ENCODE measurements at regions of chr1 and their contacts with region 1.

Region 1: DNA sequence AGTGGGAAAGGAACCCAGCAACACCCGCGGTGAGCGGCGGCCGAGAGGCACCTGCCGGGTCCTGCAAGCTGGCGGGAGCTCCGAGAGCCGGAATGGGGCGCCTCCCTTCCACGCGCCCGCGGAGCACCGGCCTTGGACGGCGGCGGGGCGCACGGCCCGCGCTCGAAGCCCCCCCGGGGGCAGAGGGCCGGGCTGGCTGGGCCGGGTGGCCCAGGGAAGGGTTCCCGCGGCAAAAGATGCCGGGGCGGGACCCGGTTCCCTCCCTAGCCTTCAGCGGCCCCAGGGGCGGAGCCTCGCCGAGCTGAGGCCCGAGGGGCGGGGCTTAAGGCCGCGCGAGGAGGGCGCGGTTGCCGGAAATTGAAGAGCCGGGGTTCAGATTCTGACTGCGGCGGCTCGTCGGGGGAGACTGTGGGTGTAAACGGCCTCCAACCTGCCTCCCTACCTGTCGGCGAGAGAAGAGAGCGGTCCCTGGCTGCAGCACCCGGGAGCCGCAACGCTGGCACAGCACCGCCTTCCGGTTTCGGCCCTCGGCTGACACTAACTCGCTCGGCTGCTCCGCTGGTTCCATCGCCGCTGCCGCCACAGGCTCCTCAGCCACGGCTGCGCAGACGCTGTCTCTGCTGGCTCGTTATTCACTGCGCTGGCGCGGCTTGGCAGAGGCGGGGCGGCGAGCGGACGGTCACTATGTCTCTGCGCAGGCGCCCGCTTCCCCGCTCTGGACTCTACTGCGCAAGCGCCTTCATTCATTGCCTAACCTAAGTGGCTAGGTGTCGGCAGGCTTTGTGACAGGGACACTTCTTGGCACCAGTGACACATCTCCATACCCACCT is at the start of gene RABIF:
- DNase-seq: peak; percentile 78
- H3K4me3 ChIP-seq: peak within 1 kb of the TSS; percentile 89
- H3K27ac ChIP-seq: peak within 1 kb of the TSS; percentile 87
- H3K27me3 ChIP-seq: no peaks in the 10 kb centered on the region
- CTCF ChIP-seq: peak; percentile 43
- polyA plus RNA-seq, gene RABIF: 11.5 and 12.6 TPM in 2 replicates

Region 2: GRCh38 chr1:202786804-202787203 is 101.9 kb before region 1 on chr1:
- CTCF ChIA-PET with region 1: no interaction called
- POLR2A ChIA-PET with region 1: interaction called, 11 read pairs
- DNase-seq: no peak
- H3K4me3 ChIP-seq: no peak overlapping the region
- H3K27ac ChIP-seq: peak overlapping the region; percentile 39
- H3K27me3 ChIP-seq: no peaks in the 10 kb centered on the region
- CTCF ChIP-seq: no peak

Measured in AG04450 (cell line).